Cardiac septum (tissue), 1 donor: ENCODE measurements at regions of chr7 and their contacts with region 1.

Region 1: GRCh38 chr7:125059861-125060456 is 130.3 kb upstream of the POT1 start:
- DNase-seq: no peak

Region 2: GRCh38 chr7:124597509-124597908 is 462.4 kb before region 1 on chr7:
- intact Hi-C with region 1: no loop called
- DNase-seq: no peak

Region 3: GRCh38 chr7:125670926-125671572 is 611.1 kb after region 1 on chr7:
- intact Hi-C with region 1: loop called (anchors 5 kb)
- DNase-seq: no peak